OCI-LY7 (cell line): ENCODE measurements at regions of chr10 and their contacts with region 1.

Region 1: DNA sequence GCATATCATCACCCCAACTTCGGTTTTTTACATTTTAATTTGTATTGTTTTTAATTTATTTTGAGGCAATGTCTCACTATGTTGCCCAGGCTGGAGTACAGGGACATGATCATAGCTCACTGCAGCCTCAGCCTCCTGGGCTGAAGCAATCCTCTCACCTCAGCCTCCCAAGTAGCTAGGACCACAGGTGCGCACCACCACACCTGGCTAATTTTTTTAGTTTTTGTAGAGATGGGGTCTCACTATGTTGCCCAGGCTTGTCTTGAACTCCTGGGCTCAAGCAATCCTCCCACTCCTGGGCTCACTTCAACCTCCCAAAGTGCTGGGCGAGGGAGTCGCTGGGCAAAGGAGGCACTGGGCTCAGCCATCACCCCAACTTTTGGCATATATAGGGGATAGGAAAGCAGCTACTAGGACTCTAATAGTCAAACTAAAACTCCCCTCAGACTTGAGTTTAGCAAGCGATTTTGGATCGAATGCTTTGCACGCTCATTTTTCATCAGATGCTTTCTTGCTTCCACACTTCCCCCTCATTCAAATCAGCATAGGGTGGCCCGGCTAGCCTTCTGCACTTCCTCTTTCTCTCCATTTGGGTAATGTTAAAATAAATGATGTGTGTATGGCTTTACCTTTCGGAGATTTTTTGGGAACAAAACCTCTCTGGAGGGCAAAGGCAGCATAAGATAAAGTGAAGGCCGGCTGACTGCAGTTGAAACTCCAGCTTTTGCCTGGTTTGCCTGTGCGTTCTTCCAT is 20.8 kb upstream of the NMT2 start:
- DNase-seq: no peak
- H3K4me3 ChIP-seq: no peak overlapping the region
- H3K27ac ChIP-seq: no peak overlapping the region
- H3K4me1 ChIP-seq: no peaks in the 10 kb centered on the region
- CTCF ChIP-seq: no peak

Region 2: GRCh38 chr10:14024329-14025202 is 1164.7 kb before region 1 on chr10:
- CTCF ChIA-PET with region 1: no interaction called
- POLR2A ChIA-PET with region 1: interaction called, 10 read pairs
- intact Hi-C with region 1: no loop called
- DNase-seq: no peak
- H3K4me3 ChIP-seq: no peak overlapping the region
- H3K27ac ChIP-seq: no peak overlapping the region
- H3K4me1 ChIP-seq: no peaks in the 10 kb centered on the region
- CTCF ChIP-seq: no peak

Region 3: GRCh38 chr10:15141136-15142054 is 47.9 kb before region 1 on chr10:
- CTCF ChIA-PET with region 1: no interaction called
- POLR2A ChIA-PET with region 1: no interaction called
- intact Hi-C with region 1: no loop called
- DNase-seq: no peak
- H3K4me3 ChIP-seq: no peak overlapping the region
- H3K27ac ChIP-seq: no peak overlapping the region
- H3K4me1 ChIP-seq: no peaks in the 10 kb centered on the region
- CTCF ChIP-seq: no peak